Uterus (tissue), 4 donors: ENCODE measurements at regions of chr11 and their contacts with region 1.

Region 1: DNA sequence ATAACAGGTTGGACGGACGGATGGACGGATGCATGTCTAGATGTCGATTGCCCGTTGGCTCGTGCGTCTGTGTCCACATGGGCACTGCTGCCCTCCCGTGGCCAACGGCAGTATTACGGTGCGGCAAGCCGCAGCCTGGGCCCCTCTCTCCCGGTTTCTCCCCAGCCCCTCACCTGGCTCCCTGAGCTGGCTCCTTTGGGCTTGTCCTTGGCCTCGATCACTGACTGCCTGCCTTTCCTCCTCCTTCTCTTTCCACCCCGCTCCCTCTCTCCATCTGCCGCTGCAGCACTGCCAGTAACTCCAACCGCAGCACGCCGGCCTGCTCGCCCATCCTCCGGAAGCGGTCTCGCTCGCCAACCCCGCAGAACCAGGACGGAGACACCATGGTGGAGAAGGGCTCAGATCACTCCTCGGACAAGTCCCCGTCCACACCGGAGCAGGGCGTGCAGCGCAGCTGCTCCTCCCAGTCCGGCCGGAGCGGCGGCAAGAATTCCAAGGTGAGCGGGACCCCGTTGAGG is 77.3 kb downstream of the SCN3B start:
- DNase-seq: peak; percentile 56 to 68
- H3K4me3 ChIP-seq: no peak overlapping the region
- H3K27ac ChIP-seq: no peak overlapping the region
- H3K4me1 ChIP-seq: no peaks in the 10 kb centered on the region
- H3K27me3 ChIP-seq: no peaks in the 10 kb centered on the region
- CTCF ChIP-seq: peak; percentile 85 to 92 (median 86)
- POLR2A ChIP-seq: no peak

Region 2: DNA sequence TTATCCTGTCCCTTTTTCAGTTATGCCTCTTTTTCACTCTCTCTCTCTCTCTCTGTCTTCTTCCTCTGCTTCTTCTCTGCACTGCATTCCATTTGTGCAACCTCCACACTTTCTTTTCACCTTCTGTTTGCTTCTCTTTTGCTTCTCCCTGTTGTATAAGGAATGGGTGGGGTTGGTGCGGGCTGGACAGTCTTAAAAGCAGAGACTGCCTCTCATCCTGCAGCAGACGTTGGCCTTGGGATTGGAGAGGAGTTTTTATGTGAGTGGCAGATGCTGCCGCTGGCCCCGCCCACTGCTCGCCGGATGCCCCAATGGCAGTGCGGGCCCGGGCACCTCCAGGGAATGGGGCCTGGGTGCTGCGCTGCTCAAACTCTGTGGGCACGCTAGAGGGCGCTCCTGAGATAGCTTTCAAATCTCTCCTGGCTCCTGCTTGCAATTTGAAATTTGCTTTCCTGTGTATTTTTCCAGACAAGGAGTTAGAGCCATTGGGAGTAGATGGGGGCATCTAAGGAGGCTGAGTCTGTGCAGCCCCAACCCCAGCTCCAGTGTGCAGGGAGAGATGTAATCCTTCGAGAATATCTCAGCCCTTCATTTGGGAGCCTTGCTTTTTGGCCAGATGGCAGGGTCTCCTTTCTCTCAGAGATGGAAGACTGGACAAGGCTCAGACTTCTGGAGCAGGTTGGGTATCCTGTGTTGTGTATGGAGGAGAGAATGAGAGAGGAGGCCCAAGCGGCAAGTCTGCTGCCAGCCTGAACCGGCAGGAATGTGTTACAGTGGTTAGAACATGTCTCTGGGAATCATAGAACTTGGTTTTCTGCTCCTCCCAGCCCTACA is 65.9 kb before region 1 on chr11:
- intact Hi-C with region 1: loop called (anchors 5 kb)
- DNase-seq: peak; percentile 73 to 77
- H3K4me3 ChIP-seq: no peak overlapping the region
- H3K27ac ChIP-seq: no peak overlapping the region
- H3K4me1 ChIP-seq: no peaks in the 10 kb centered on the region
- H3K27me3 ChIP-seq: no peaks in the 10 kb centered on the region
- CTCF ChIP-seq: peak; percentile 67 to 81 (median 78)
- POLR2A ChIP-seq: no peak